Dendritic cell treated with granulocyte-macrophage colony-stimulating factor and Interleukin-4, amounts not matched to agents 40 ng/mL and 50 ng/mL, for 4 days (primary cell): ENCODE measurements at regions of chr4 and their contacts with region 1.

Region 1: GRCh38 chr4:77007358-77008191 is 58.0 kb downstream of the SEPTIN11 start:
- H3K4me3 Mint-ChIP-seq: peak overlapping the region; percentile 32
- H3K27ac Mint-ChIP-seq: peak overlapping the region; percentile 81
- H3K4me1 Mint-ChIP-seq: peaks cover 56% of the 10 kb centered on the region
- H3K27me3 Mint-ChIP-seq: no peaks in the 10 kb centered on the region

Region 2: GRCh38 chr4:76939184-76939583 is 68.4 kb before region 1 on chr4:
- intact Hi-C with region 1: no loop called
- H3K4me3 Mint-ChIP-seq: no peak overlapping the region
- H3K27ac Mint-ChIP-seq: no peak overlapping the region
- H3K4me1 Mint-ChIP-seq: no peaks in the 10 kb centered on the region
- H3K27me3 Mint-ChIP-seq: no peaks in the 10 kb centered on the region

Region 3: DNA sequence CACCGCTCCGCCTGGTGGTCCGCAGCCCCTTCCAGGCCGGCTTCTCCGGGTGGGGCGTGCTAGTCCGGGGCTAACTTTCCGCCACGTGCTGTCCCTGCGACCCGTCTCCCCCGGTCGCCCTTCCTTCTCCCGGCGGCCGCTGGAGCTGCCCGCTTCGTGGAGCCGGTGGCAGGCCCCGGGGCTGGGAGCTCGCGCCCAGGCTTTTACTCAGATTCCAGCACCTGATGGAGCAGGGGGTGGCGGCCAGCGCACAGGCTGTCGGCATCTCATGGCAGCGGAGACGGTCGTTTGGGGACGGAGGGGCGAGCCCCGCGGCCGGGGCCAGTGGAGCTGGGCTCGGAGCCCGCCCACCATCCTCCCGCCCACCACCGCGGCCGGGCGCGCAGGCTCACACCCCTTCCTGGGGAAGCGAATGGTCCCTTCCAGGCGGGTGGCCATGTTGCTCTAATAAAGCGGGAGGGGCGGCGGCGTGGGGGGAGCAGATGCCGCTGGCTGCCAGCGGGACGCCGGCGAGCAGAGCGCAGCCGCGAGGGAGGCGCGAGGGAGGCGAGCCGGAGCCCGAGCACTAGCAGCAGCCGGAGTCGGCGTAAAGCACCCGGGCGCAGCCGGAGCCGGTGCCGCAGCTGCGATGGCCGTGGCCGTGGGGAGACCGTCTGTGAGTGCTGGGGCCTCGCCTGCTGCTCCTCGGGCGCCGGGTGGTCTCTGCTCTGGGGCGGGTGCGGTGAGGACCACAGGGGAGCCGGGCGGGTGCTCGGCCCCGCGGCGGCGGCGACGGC is 58.1 kb before region 1 on chr4 and contains the start of gene SEPTIN11:
- intact Hi-C with region 1: loop called (anchors 2 kb)
- H3K4me3 Mint-ChIP-seq: peak within 1 kb of the TSS; percentile 92
- H3K27ac Mint-ChIP-seq: peak within 1 kb of the TSS; percentile 85
- H3K4me1 Mint-ChIP-seq: peaks cover 41% of the 10 kb centered on the region
- H3K27me3 Mint-ChIP-seq: peaks cover 16% of the 10 kb centered on the region

Region 4: DNA sequence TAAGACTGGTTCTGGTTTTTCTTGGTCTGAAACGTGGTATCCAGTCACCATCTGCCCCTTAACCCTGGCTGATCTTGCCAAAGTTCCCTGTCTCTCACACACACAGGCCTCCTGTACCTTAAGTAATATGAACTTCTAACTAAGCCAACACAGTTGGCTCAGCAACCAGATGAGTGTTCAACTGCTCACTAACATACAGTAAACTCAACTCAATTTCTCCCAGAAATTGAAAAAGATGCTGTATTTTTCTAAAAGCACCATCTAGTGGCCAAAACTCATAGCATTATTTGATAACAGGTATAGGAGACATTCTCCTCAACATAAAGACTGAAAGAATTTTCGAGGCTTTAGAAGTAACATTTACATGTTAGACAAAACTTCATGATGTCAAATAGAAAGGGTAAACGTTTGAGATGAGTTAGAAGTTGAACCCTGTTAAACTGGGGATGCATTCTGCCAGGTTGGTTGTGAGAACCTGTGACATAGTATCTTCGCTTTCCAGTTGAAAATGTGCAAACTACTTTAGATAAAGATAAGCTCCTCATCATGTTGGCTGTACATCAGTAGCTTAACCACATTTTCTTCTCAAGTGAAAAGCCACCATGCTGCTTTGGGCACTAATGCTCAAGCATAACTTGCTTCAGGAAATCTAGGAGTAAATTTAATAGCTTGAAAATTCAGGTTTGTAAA is 37.0 kb after region 1 on chr4:
- intact Hi-C with region 1: loop called (anchors 5 kb)
- H3K4me3 Mint-ChIP-seq: no peak overlapping the region
- H3K27ac Mint-ChIP-seq: no peak overlapping the region
- H3K4me1 Mint-ChIP-seq: peaks cover 17% of the 10 kb centered on the region
- H3K27me3 Mint-ChIP-seq: no peaks in the 10 kb centered on the region

Region 5: DNA sequence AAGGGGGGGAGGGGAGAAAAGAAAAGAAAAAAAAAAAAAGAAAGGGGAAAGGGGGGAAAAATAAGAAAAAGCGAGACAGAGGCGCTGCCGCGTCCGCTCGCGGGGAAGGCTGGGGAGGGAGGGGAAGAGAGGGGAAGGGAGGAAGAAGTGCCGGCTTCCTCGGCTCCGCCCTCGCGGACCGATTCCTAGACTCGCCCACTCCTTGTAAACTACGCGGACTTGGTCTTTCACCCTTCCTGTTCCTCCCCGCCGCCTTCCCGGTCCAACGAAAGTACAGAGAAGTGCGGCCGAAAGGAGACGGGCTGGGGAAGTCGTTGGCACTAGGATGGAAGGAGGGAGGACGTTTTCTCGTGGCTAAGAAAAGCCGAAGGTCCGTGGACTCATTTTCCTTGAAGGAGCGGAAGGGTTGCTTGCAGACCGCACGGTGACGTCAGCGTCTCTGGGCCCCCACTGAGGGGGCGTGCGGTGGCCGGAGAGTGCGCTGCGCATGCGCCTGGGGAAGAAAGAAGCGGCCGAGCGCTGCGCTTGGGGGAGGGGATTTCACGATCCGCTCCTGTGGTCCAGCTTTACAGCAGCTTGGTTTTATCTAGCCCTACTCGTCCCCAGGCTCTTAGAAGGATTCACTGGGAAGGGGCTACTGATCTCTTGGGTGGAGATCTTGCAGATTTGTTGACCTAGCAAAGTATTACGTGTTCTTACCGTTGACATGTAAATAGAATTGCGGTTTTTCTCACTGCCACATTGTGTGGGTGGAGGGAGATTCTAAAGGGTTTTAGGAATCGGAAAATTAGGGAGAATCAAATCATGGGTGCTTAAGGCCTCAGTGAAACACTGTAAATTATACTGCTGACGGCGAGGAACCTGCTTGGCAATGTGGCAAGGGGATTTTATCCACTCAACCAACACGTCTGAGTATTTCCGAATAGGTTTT is 68.6 kb after region 1 on chr4 and contains the start of gene CCNI:
- intact Hi-C with region 1: loop called (anchors 5 kb)
- H3K4me3 Mint-ChIP-seq: peak within 1 kb of the TSS; percentile 94
- H3K27ac Mint-ChIP-seq: no peak within 1 kb of the TSS
- H3K4me1 Mint-ChIP-seq: peaks cover 33% of the 10 kb centered on the region
- H3K27me3 Mint-ChIP-seq: no peaks in the 10 kb centered on the region